ENCODE measurements at regions of chr9 and their contacts with region 1.

Region 1: GRCh38 chr9:86652736-86653135 is 294.6 kb downstream of the GAS1 start:
- DNase-seq: no peak
- H3K4me3 ChIP-seq: no peak overlapping the region
- H3K27ac ChIP-seq: no peak overlapping the region
- H3K4me1 ChIP-seq: peaks cover 8% of the 10 kb centered on the region
- H3K27me3 ChIP-seq: no peaks in the 10 kb centered on the region
- CTCF ChIP-seq: no peak
- POLR2A ChIP-seq: no peak

Region 2: DNA sequence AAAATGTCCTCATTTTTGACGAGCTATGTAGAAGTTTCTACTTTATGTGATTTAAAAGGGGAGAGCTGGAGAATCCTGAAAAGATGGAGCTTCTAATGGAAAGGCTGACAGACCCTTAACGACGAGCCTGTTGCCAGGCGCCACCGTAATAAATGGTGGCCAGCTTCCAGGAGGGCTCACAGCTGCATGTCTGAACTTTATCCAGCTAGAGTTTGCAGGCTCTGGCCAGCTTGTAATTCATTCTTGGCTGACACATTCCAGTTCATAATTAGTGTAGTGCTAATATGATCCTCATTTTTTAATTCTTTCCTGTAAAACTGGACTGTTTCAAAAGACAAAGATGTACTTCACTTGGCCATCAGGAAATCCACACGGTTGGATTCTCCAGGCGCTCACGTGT is 47.9 kb after region 1 on chr9:
- intact Hi-C with region 1: no loop called
- DNase-seq: no peak
- H3K4me3 ChIP-seq: no peak overlapping the region
- H3K27ac ChIP-seq: no peak overlapping the region
- H3K4me1 ChIP-seq: peaks cover 10% of the 10 kb centered on the region
- H3K27me3 ChIP-seq: no peaks in the 10 kb centered on the region
- CTCF ChIP-seq: no peak
- POLR2A ChIP-seq: no peak

Region 3: GRCh38 chr9:86902991-86903733 is 250.4 kb after region 1 on chr9:
- intact Hi-C with region 1: loop called (anchors 5 kb)
- DNase-seq: no peak
- H3K4me3 ChIP-seq: peak overlapping the region in 1 of 2 donors; percentile 28
- H3K27ac ChIP-seq: no peak overlapping the region
- H3K4me1 ChIP-seq: peaks cover 14% of the 10 kb centered on the region
- H3K27me3 ChIP-seq: peaks cover 6% of the 10 kb centered on the region
- CTCF ChIP-seq: no peak
- POLR2A ChIP-seq: no peak

Region 4: DNA sequence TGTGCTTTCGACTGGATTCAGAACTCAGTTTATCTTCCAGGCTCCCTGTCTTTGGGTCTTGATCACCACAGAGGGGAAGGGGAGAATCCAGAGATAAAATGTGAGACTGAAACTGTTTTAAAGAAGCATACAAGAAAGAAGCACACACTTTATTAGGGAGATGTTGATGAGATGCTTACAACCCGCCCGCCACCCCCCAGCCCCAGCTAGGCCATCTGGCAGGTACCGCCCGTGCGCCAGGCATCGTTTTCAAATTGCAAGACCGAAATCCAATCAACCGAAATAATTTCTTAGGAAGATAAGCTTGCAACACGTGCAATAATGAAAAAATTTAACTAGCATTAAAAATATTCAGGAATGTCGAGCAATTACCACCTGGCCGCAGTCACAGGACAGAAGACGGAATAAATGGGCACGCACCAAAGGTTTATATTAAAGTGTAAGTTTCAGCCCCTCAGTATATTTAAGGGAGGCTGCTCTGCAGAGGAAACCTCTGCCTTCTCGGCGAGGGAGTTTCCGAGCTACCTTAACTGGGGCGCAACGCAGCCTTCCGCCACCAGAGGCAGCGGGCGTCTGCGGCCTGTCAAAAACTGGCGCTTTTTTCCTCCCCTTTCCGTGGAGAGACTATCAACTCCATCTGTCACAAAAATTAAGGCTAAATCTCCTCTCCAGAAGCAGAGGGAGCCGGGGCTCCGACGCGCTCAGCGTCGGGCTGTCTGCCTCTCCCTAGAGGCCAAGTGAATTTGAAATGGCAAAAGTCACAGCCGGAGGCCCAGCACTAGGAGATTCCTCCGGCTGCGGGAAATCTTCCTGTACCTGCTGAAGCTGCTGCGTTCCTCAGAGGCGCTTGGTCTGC is 295.6 kb after region 1 on chr9:
- intact Hi-C with region 1: no loop called
- DNase-seq: no peak
- H3K4me3 ChIP-seq: peak overlapping the region; percentile 81 to 90
- H3K27ac ChIP-seq: peak overlapping the region; percentile 90
- H3K4me1 ChIP-seq: peaks cover 20% of the 10 kb centered on the region
- H3K27me3 ChIP-seq: no peaks in the 10 kb centered on the region
- CTCF ChIP-seq: peak in 2 of 3 experiments; percentile 46 to 79
- POLR2A ChIP-seq: no peak